Activated B cell treated with CpG ODN at 0.5 μM for 24 hours (primary cell): ENCODE measurements at regions of chr7 and their contacts with region 1.

Region 1: GRCh38 chr7:54326592-54327167 is 215.5 kb upstream of the VSTM2A start:
- DNase-seq: no peak
- ATAC-seq: no peak
- H3K4me3 Mint-ChIP-seq: no peak overlapping the region
- H3K27ac Mint-ChIP-seq: no peak overlapping the region
- H3K4me1 Mint-ChIP-seq: no peaks in the 10 kb centered on the region
- H3K27me3 Mint-ChIP-seq: no peaks in the 10 kb centered on the region
- CTCF ChIP-seq: no peak

Region 2: DNA sequence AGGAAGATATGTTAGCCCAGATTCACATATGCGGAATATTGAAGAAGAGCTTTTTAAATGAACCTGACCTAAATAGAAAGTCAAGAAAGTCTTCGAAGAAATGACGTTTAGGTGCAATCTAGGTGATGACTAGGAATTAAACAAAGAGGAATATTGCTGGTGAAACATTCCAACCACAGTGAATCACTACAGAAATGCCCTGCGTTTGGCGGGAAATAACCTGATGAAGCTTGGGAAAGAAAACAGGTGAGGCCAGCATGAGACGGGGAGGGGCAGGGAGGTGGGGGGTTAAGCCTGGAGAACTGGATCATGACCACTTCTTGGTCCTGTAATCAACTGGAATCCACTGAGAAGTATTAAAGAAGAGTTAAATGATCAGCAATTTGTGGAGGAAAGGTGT is 83.9 kb before region 1 on chr7:
- CTCF ChIA-PET with region 1: no interaction called
- POLR2A ChIA-PET with region 1: no interaction called
- intact Hi-C with region 1: loop called (anchors 5 kb)
- DNase-seq: no peak
- ATAC-seq: no peak
- H3K4me3 Mint-ChIP-seq: no peak overlapping the region
- H3K27ac Mint-ChIP-seq: no peak overlapping the region
- H3K4me1 Mint-ChIP-seq: no peaks in the 10 kb centered on the region
- H3K27me3 Mint-ChIP-seq: no peaks in the 10 kb centered on the region
- CTCF ChIP-seq: no peak